Cardiac septum (tissue), 1 donor: ENCODE measurements at regions of chr2 and their contacts with region 1.

Region 1: GRCh38 chr2:54634564-54635511 is 88.6 kb upstream of the EML6 start:
- DNase-seq: peak; percentile 85

Region 2: GRCh38 chr2:54115284-54116137 is 519.3 kb before region 1 on chr2 and contains the start of gene ACYP2:
- intact Hi-C with region 1: loop called (anchors 5 kb)
- DNase-seq: peak; percentile 98
- total RNA-seq, gene ACYP2: 86.1 TPM

Region 3: DNA sequence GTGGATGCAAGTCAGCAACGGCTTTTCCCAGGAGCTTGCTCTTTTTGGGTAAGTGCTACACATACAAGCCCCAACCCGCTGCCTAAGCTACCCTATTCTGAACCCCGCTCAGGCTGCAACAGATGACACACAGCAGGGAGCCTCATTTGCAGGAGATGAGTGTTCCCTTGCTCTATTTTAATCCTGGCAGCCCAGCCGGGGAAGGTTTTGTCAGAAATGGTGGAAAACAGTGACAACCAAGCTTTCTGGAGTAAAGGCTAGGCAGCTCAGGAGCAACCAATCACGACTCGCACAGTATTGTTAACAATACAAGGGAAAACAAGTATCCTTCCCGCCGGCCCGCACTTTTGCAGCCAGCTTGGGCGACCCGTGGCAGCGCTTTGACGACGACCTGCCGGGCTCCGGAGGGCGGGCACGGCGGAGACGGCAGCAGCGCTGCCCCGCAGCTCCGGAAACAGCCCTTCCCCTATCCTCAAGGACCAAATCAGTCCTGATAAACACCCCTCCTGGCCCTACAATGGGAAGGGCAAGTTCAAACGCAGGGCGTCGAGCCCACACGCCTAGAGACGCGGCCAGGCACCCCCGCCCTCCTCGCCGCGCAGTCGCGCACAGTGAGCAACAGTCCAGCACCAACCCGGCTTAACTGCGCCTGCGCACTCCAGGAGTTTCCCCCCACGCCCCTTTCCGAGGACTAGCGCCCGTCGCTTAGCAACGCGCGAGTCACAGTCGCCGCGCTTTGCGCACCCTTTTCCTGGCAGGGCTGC is 304.5 kb before region 1 on chr2:
- intact Hi-C with region 1: loop called (anchors 10 kb)
- DNase-seq: peak; percentile 98

Region 4: GRCh38 chr2:54479422-54479821 is 155.4 kb before region 1 on chr2:
- intact Hi-C with region 1: loop called (anchors 5 kb)
- DNase-seq: no peak

Region 5: DNA sequence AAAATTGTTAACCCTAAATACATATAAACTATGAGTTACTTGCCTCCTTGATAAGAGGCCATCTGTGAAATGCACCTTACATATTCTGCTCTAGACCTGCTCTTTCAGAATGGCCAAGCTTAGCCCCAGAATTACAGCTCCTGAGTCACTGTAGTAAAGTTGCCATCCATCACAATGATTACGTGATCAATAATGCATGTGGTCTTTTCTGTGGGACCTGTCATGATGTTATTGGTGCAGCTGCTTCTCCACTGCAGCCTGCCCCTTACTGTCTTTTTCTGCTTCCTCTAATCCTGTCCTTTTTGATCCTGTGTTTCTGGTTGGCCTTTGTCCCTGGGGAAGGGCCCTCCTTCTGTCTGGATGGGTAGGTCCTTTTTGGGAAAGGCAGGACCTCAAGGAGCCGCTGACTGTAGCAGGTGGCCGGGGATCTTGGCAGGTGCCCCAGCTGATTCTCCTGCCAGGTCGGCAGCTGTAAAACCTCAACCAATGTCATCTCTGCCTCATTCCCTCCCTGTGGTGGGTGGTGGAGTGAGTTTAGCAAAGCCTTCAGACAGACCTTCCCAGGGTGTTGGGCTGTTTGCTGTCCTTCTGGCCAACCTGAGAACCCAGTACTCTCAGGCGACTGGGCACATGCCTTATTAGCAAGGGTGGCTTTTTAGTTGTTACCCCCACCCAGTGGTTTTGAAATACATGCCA is 37.5 kb before region 1 on chr2:
- intact Hi-C with region 1: loop called (anchors 5 kb)
- DNase-seq: peak; percentile 80

Region 6: GRCh38 chr2:54673501-54673998 is 38.7 kb after region 1 on chr2:
- intact Hi-C with region 1: loop called (anchors 5 kb)
- DNase-seq: peak; percentile 90